ENCODE measurements at regions of chr2 and their contacts with region 1.

Region 1: DNA sequence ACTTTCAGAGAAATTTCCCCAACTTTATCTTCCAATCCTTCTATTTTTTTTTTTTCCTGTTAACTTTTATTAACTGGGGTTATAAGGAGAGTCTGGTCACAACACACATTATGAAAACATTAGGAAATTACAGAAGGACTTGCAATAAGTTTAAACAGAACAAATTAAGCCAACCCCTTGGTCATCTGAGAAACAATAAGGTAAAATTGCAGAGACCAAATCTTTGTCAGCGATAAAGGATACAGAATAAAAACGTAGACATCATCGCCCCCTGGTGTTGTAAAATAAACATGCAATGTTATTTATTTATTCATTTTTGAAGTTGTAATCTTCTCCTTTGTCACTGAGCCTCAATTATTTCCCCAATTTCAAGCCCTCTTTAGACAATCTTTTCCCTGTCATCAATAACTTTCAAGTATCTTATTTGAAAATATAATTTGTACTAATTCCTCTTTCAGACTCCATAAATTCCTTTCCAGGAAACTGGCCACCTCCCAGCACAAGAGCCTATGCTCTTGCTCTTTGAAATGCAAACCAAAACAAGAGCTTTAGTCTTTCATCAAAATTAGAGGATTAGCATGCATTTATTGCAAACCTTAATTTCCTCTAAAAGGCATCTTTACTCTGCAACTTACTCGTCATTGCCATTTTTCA is 19.5 kb downstream of the G6PC2 start:
- DNase-seq: no peak
- H3K4me3 ChIP-seq: no peak overlapping the region
- H3K27ac ChIP-seq: no peak overlapping the region
- H3K4me1 ChIP-seq: no peaks in the 10 kb centered on the region
- H3K27me3 ChIP-seq: peaks cover 0 to 5% (median 0%) of the 10 kb centered on the region in 4 donors
- CTCF ChIP-seq: peak; percentile 34 to 71 (median 62)
- POLR2A ChIP-seq: no peak

Region 2: GRCh38 chr2:168510125-168510756 is 410.4 kb before region 1 on chr2:
- intact Hi-C with region 1: no loop called
- DNase-seq: no peak
- H3K4me3 ChIP-seq: no peak overlapping the region
- H3K27ac ChIP-seq: no peak overlapping the region
- H3K4me1 ChIP-seq: peaks cover 0 to 12% (median 0%) of the 10 kb centered on the region in 3 donors
- H3K27me3 ChIP-seq: no peaks in the 10 kb centered on the region
- CTCF ChIP-seq: no peak
- POLR2A ChIP-seq: no peak

Region 3: GRCh38 chr2:168773719-168774521 is 146.7 kb before region 1 on chr2:
- intact Hi-C with region 1: loop called (anchors 10 kb)
- DNase-seq: no peak
- H3K4me3 ChIP-seq: no peak overlapping the region
- H3K27ac ChIP-seq: no peak overlapping the region
- H3K4me1 ChIP-seq: no peaks in the 10 kb centered on the region
- H3K27me3 ChIP-seq: no peaks in the 10 kb centered on the region
- CTCF ChIP-seq: peak in 5 of 6 experiments; percentile 51 to 76 (median 69)
- POLR2A ChIP-seq: no peak

Region 4: GRCh38 chr2:169173876-169174275 is 253.2 kb after region 1 on chr2:
- intact Hi-C with region 1: no loop called
- DNase-seq: no peak
- H3K4me3 ChIP-seq: no peak overlapping the region
- H3K27ac ChIP-seq: no peak overlapping the region
- H3K4me1 ChIP-seq: no peaks in the 10 kb centered on the region
- H3K27me3 ChIP-seq: peaks cover 0 to 21% (median 0%) of the 10 kb centered on the region in 4 donors
- CTCF ChIP-seq: no peak
- POLR2A ChIP-seq: no peak

Region 5: DNA sequence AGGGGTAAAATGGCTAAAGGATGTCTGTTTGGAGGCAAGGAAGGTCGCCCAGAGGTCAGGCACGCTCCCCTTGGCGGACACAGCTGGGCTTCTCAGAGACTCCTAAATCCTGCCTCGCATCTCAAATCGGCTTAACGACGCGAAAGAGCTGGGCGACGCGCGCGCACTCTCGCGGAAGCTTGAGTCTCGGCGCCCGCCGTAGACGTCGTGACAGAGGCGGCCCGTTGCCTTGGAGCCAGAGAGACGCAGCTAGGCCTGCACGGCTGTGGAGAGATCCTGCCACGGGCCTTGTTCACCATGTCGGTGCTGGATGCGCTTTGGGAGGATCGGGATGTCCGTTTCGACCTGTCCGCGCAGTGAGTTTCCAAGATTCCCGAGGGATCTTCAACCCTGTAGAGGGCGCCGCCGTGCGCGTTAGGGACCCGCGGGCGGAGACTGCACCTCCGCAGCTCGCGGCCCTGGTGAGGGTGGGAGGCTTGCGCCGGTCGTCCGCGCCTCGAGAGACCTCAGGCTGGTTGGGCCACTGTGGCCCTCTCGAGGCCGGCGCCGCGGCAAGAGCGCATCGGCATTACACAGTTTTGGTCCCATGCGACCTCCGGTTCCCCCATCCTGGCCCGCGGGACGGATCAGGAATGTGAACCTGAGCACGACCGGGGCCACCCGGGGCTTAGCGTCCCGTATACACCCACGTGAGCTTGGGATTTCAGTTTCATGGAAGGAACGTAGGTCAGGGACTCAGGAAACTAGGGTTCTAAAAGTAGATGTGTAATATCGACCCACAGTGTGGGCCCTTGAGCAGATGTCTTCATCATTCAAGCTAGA is 558.8 kb after region 1 on chr2 and contains the start of gene BBS5:
- intact Hi-C with region 1: no loop called
- DNase-seq: peak; percentile 11
- H3K4me3 ChIP-seq: peak within 1 kb of the TSS; percentile 64 to 92 (median 83)
- H3K27ac ChIP-seq: peak within 1 kb of the TSS; percentile 65 to 83 (median 80)
- H3K4me1 ChIP-seq: peaks cover 8 to 15% (median 10%) of the 10 kb centered on the region in 3 donors
- H3K27me3 ChIP-seq: no peaks in the 10 kb centered on the region
- CTCF ChIP-seq: peak; percentile 12 to 50 (median 32)
- POLR2A ChIP-seq: no peak
- total RNA-seq, gene BBS5: 1.4 to 7.1 (median 2.6) TPM